Posterior cingulate gyrus (tissue), 11 donors: ENCODE measurements at regions of chr1 and their contacts with region 1.

Region 1: GRCh38 chr1:91929250-91929649 is 20.0 kb upstream of the BRDT start:
- DNase-seq: no peak

Region 2: DNA sequence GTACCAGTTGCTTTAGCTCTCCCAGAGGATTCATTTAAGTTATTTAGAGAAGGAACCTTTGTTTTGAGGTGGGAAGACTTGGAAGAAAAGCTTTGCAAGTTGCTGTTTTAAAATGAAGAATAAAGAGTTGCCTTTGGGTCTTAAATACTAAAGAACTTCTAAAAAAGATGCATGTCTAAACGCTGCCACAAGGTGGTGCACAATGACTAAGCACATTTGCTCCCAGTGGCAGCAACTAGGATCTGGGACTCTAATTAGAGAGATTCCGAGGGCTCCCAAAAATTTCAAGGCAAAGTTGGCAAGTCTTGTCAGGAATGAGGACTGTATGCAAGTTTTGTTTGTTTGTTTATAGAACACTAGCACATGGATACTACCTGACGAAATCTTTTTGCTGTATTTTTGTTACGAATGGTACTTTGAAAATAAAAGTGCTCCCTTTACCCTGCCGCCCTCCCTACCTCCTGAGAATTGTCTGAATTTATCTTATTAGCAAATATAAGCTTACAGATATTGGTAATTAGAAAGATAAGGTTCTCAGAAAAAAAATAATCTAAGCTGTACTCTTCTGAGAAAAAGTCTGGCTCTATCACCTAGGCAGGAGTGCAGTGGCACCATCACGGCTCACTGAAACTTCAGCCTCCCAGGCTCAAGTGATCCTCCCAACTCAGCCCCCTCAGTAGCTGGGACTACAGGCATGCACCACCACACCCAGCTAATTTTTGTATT is 646.4 kb before region 1 on chr1:
- intact Hi-C with region 1: loop called (anchors 2 kb)
- DNase-seq: peak in 8 of 10 donors; percentile 40 to 90 (median 55)

Region 3: GRCh38 chr1:91511386-91511785 is 417.9 kb before region 1 on chr1:
- intact Hi-C with region 1: loop called (anchors 1 kb)
- DNase-seq: no peak

Region 4: GRCh38 chr1:92026806-92027205 is 97.6 kb after region 1 on chr1:
- intact Hi-C with region 1: no loop called
- DNase-seq: no peak